HEK293 (cell line): ENCODE measurements at regions of chr2 and their contacts with region 1.

Region 1: GRCh38 chr2:186820303-186820702 is 28.7 kb downstream of the ZSWIM2 start:
- H3K4me3 ChIP-seq: no peak overlapping the region
- H3K27ac ChIP-seq: no peak overlapping the region
- H3K4me1 ChIP-seq: no peaks in the 10 kb centered on the region
- CTCF ChIP-seq: no peak

Region 2: DNA sequence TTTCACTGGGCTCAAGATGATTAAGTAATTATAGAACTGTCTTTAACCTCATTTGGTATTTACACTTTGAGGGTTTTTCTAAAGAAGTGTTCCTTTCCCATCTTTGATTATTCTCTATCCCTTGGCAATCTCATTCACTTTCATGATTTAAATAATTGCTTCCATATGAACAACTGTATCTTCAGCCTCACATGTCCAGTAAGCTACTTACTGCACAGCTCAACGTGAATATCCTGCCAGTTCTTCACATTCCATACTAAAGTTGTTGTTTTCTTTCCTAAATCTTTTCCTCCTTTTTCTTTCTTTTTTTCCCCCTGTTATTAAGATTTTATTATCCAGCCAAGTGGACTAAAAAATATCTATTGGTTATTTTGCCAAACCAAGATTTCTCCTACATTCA is 296.5 kb before region 1 on chr2:
- CTCF ChIA-PET with region 1: no interaction called
- POLR2A ChIA-PET with region 1: no interaction called
- H3K4me3 ChIP-seq: no peak overlapping the region
- H3K27ac ChIP-seq: no peak overlapping the region
- H3K4me1 ChIP-seq: no peaks in the 10 kb centered on the region
- CTCF ChIP-seq: no peak

Region 3: GRCh38 chr2:186806591-186806990 is 13.7 kb before region 1 on chr2:
- CTCF ChIA-PET with region 1: no interaction called
- POLR2A ChIA-PET with region 1: interaction called, 10 read pairs
- H3K4me3 ChIP-seq: no peak overlapping the region
- H3K27ac ChIP-seq: no peak overlapping the region
- H3K4me1 ChIP-seq: no peaks in the 10 kb centered on the region
- CTCF ChIP-seq: no peak